Breast epithelium (tissue), 4 donors: ENCODE measurements at regions of chr2 and their contacts with region 1.

Region 1: DNA sequence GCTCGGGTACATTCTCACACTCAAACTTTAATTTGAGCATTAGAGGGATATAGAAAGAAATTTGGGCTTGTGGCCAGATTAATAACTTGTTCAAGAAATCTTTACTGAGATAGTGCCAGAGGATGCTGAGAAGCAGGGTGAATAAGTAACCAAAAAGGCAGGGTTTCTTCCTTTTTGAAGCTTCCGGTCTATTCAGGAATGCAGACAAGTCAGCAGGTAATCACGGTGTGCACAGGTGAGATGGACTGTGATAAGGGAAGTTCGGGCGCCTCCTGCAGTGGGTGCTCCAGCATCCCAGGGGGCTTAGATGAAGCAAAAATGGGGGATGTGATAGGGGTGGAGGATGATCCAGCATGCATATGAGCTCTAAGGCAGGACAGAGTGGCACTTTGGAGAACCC is 44.9 kb upstream of the CYP1B1 start:
- DNase-seq: no peak
- H3K4me3 ChIP-seq: no peak overlapping the region
- H3K27ac ChIP-seq: no peak overlapping the region
- H3K4me1 ChIP-seq: no peaks in the 10 kb centered on the region
- H3K27me3 ChIP-seq: no peaks in the 10 kb centered on the region
- CTCF ChIP-seq: no peak
- POLR2A ChIP-seq: no peak

Region 2: DNA sequence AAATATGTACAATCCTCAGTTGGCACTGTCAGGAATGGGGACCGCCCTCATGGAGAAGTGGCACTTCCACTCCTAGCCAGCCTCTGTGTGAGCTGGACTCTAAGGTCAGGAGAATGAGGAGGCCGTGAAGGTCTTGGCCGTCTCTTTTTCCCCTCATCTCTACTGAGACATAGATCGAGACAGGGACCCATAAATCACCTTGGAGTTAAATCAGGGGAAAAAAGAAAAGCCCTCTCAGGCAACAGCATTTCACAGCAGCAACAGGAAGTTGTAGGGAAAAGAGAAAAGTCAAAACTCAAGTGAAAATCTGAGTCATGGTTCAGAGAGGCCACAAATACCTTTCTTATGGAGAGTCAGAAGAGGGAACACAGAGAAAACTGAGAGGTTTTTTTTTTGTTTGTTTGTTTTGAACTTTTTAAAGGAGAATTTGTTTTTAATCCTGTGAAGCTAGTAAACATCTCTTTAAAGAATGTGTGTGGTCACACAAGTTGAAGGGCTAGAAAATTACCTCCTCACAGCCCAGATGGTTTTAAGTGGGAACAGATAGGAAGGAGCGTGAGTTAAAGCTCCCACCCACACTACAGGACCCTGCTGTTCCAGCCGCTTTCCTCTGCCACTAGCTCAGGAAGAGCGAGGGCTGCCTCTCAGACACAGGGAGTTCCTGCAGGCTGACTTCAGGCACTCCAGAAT is 14.3 kb before region 1 on chr2:
- intact Hi-C with region 1: no loop called
- DNase-seq: no peak
- H3K4me3 ChIP-seq: no peak overlapping the region
- H3K27ac ChIP-seq: peak overlapping the region; percentile 82 to 87
- H3K4me1 ChIP-seq: no peaks in the 10 kb centered on the region
- H3K27me3 ChIP-seq: no peaks in the 10 kb centered on the region
- CTCF ChIP-seq: no peak
- POLR2A ChIP-seq: no peak

Region 3: DNA sequence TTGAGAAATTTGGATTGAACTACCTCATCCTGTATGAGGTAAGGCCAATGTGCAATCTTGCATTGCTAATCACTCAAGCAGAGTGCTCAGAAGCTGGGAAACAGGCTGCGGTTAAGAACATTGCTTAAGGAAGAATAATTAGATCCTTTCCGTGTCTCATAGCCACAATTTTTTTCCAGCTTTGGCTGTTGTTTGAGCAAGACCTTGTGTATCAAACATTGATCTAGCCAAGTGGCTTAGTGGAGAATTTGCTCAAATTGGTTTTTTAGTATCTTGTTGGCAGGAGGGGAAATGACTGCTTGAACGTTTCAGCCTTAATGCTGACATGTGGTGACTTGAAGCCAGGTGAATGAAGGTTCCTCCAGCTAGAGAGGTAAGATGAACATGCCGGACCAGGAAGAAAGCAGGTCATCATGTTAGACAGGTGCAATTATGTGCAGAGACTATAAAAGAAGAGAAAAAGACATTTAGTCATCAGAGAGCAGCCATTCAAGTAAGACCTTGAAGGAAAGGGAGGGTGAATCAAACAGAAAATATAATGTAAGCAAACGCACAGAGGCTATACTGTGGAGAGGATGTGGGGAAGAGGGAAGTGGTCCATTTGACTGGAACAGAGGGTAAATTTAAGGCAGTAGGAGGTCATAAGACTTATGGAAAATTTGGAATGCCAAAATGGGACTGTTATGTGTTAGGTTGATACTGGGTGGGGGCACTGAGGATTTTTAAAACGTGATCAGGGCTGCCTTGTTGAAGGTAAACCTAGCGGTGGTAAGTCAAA is 54.0 kb after region 1 on chr2:
- intact Hi-C with region 1: loop called (anchors 2 kb)
- DNase-seq: peak in 1 of 2 donors; percentile 48
- H3K4me3 ChIP-seq: peak overlapping the region in 1 of 3 donors; percentile 18
- H3K27ac ChIP-seq: peak overlapping the region; percentile 50 to 79
- H3K4me1 ChIP-seq: peaks cover 15 to 22% of the 10 kb centered on the region in 2 donors
- H3K27me3 ChIP-seq: no peaks in the 10 kb centered on the region
- CTCF ChIP-seq: no peak
- POLR2A ChIP-seq: no peak